ENCODE measurements at regions of chr12 and their contacts with region 1.

Region 1: GRCh38 chr12:52041695-52042123 is 9.5 kb upstream of the NR4A1 start:
- DNase-seq: peak; percentile 87

Region 2: GRCh38 chr12:52197371-52198231 is 155.9 kb after region 1 on chr12:
- intact Hi-C with region 1: loop called (anchors 5 kb)
- DNase-seq: no peak

Region 3: GRCh38 chr12:52879394-52880351 is 838.0 kb after region 1 on chr12:
- intact Hi-C with region 1: loop called (anchors 10 kb)
- DNase-seq: peak; percentile 86

Measured in cardiac septum (tissue), 1 donor.